GM18951 (cell line): ENCODE measurements at regions of chr11 and their contacts with region 1.

Region 1: DNA sequence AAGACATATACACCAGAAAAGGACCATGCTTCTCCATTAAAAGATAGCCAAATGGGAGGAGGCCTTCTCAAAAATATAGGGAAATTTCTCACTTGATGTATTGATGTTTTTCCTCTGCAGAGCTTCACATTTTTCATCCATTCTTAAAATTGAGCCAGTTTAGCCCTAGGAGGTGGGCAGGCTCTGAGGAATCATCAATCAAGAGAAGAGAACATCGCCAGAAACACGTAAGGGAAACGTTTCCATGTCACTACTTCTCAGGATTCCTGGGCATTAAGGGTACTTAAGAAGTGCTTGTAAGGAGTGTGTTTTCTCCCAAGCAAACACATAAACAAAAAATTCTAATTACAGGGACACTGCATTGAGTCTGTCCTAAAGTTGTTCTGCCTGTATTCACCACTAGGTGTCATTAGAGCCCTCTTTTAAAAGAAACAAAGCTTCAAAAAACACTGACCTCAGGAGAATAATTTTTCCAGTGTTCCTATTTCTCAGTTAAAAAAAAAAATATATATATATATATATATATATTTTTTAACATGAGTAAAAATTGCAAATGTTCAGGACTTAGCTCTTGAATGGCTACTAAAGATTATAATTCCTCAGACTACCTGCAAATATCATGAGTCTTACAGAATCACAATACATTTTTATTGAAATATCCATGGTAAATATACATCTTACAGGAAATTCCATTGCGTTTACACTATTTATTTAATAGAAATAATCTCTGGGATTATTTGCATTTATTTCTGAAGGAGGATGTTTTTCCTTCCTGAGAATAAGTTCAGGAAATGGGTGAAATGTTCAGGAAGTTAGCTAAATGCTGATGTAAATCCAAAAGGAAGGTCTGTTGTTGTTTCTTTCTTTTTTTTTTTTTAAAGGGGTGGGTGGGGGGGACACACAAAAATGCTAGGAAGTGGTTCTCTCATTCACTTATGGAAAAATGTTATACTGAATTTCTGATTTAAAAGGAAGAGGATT is 16.0 kb downstream of the FZD4 start:
- POLR2A ChIP-seq: no peak

Region 2: DNA sequence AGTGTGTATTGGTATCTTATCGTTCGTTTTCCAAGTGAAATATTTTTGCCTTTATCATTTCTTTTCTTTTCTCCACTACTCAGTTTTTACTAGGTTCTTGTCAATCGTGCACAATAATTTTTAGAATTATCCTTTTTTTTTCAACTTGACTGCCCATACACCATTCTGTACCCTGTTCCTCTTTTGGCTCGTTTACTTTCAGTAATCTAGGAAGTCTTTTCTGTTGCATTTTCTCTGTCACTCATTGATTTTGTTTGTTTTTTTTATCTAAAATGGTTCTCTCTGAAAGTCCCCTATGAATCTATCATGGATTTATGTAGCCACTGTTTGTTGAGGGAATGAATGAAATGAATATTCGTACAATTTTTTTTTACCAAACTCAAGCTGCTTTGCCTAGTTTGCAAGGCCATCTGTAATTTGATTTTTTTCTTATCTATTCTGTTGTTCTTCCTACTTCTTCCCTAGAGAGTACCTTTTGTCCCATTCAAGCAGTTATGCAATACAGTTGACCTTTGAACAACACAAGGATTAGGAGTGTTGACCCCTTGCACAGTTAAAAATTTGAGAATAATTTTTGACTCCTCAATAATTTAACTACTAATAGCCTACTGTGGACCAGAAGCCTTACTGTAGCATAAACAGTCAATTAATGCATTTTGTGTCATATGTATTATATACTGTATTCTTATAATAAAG is 264.9 kb after region 1 on chr11:
- in situ Hi-C with region 1: no loop called
- POLR2A ChIP-seq: no peak

Region 3: DNA sequence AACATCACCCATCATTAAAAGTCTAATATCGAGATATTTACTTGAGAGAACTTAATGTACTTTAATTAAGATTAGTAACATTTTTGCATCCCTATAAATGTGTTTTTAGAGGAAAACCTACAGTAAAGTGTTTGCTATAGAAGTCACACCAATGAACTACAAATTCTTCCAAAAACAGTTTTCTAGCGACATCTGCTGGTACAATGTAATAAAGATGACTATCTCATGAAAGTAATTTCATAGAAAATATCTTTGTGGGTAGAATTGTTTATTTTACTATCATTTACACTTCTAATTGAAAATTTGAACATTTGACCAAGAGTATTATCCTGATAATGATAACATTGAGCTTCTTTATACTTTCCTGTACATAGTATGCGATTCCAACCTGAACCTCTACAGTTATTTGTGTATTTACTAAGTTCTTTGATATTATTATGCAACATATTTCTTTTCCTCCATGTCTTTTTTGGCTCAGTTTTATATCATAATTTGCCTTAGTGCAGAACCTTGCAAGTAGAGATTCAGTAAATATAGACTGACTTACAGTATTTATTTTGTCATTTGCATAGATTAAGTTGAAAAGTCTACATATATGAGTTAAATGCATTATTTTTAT is 351.2 kb after region 1 on chr11:
- in situ Hi-C with region 1: loop called (anchors 25 kb)
- POLR2A ChIP-seq: no peak

Region 4: DNA sequence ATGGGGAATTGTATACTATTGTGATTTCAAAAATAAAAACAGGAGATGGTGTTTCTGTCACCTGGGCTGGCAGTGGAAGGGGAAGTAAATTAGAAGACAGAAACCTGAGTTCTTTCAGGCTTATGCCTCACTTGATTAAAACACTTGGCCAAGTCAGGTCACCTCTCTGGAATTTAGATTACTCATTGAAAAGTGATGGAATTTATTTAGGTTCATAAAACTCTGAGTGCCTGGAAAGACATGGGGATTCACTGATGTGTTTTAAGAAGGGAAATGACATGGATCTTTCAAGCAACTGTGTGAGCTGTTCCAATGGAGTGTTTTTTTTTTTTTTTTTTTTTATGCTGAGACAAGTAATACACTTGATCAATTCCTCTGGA is 498.6 kb after region 1 on chr11:
- in situ Hi-C with region 1: loop called (anchors 25 kb)
- POLR2A ChIP-seq: no peak